Lower leg skin (tissue), 4 donors: ENCODE measurements at regions of chr13 and their contacts with region 1.

Region 1: DNA sequence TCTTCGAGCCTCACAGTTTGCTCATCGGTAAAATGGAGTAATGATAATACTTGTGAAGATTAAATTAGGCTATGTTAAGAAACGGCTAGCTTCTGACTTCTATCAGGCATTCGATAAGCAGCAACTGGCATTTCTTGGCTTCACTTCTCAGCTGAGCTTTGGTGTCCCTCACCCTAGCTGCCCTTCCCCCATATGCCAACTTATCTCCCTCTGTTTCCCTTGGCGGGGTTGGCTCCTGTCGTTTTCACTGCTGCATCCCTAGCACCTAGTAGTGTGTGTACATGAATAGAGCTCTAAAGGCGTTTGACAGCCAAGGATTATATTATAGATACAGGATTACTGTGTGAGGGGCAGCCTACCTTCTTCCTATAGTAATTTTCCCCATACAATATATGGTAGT is 97.5 kb downstream of the TNFSF11 start:
- DNase-seq: no peak
- H3K4me3 ChIP-seq: no peak overlapping the region
- CTCF ChIP-seq: no peak
- POLR2A ChIP-seq: no peak

Region 2: DNA sequence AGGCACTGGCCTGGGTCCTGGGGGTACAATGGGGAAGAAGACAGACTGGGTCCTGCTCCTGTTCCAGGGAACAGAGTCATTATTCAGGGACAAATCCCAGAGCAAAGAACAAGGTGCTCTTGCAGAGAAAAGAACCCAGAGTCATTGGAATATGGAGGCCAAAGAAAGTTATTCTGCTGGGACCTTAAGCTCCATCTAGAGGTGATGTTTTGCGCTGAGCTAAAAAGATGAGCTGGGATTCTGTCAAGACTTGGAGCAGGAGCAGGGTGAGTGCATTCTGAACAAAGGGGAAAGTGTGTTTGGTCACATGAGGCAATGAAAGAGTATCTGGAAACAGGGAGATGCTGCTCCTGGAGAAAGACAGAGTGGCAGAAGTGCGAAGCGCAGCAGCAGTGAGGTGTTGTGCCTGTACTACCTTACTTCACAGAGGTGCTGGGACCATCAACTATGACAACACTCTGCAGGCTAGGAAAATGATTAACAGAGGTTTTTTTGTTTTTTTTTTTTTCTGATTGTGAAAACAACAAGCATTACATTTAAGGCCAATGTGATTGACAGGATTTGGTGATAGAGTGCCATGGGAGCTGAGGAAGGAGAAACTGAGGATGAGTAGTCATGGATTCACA is 192.9 kb before region 1 on chr13:
- intact Hi-C with region 1: no loop called
- DNase-seq: no peak
- H3K4me3 ChIP-seq: no peak overlapping the region
- CTCF ChIP-seq: no peak
- POLR2A ChIP-seq: no peak

Region 3: DNA sequence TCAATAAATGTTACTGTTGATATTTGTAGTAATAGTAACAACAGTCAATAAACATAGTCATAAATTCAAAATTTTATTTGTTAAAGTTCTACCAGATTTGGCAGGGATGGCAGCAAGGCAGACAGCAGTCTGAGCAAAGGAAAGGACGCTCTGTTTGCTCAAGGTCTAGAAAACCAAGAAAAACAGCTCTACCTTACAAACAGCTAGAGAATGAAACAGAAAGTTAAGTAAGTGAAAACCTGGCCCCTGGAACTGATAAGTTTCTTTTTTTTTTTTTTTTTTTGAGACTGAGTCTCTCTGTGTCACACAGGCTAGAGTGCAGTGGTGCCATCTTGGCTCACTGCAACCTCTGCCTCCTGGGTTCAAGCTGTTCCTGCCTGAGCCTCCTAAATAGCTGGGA is 1087.3 kb after region 1 on chr13:
- intact Hi-C with region 1: no loop called
- DNase-seq: no peak
- H3K4me3 ChIP-seq: no peak overlapping the region
- CTCF ChIP-seq: no peak
- POLR2A ChIP-seq: no peak

Region 4: DNA sequence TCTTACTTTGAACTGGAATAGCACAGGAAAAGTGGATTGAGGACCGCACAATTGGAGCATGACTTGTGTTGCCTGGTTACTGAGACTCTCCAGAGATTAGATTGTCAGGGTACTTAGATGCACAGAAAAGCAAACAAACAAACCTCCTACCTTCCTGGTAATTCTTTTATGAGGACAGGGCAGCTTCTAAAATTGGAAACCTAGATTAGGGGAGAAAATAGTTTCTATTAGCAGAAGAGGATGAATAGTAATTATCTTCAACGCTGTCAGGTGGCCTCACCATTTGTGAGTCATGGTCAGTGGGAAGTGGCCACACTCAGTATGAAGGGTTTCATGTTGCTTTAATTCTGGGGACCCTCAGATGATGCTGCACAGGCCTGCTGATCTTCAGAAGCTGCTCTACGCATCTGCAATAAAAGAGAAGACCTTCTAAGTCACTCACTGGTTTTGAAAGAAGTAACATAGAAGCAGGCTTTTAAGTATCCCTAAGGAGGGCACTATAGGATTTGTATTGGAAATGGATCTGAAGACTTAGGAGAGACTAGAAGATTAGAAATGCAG is 1315.0 kb after region 1 on chr13:
- intact Hi-C with region 1: loop called (anchors 5 kb)
- DNase-seq: no peak
- H3K4me3 ChIP-seq: no peak overlapping the region
- CTCF ChIP-seq: no peak
- POLR2A ChIP-seq: no peak